GM12878 (cell line): ENCODE measurements at regions of chr16 and their contacts with region 1.

Region 1: GRCh38 chr16:69150146-69150865 is 17.9 kb downstream of the UTP4 start:
- DNase-seq: no peak
- ATAC-seq: peak; percentile 96
- H3K4me3 ChIP-seq: no peak overlapping the region
- H3K27ac ChIP-seq: no peak overlapping the region
- H3K4me1 ChIP-seq: no peaks in the 10 kb centered on the region
- H3K27me3 ChIP-seq: no peaks in the 10 kb centered on the region
- CTCF ChIP-seq: peak; percentile 64 to 76 (median 75)
- EP300 ChIP-seq: no peak
- POLR2A ChIP-seq: no peak
- RAD21 ChIP-seq: peak; percentile 84

Region 2: DNA sequence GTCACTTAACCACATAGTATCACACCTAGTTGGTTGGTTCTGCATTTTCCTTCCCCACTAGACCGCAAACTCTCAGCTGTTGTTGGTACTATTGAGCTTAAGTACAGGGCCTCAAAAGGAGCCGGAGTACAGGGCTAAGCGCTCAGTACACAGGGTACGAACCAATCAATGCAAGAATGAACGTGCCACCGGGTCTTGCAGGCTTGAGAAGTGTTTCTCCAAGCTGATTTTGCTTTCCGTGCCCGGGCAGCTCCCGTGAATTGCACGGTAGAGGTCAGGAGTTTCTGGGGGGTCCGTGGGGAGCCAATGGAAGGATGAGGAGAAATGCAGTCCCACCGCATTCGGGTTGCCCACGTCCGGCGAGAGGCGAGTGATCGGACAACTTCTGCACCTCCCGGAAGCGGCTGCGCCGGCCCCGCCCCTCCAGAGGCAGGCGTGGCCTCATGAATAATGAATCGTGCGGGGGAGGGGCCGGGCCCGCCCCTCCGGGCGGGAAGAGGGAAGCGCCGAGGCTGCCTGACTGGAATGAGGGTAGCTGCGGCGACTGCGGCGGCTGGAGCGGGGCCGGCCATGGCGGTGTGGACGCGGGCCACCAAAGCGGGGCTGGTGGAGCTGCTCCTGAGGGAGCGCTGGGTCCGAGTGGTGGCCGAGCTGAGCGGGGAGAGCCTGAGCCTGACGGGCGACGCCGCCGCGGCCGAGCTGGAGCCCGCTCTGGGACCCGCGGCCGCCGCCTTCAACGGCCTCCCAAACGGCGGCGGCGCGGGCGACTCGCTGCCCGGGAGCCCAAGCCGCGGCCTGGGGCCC is 36.5 kb after region 1 on chr16 and contains the start of gene SNTB2:
- CTCF ChIA-PET with region 1: interaction called, 14 read pairs
- POLR2A ChIA-PET with region 1: no interaction called
- RAD21 ChIA-PET with region 1: interaction called, 7 read pairs
- SMC1A ChIA-PET with region 1: interaction called, 9 read pairs
- in situ Hi-C with region 1: no loop called
- intact Hi-C with region 1: no loop called
- DNase-seq: peak; percentile 95
- ATAC-seq: peak; percentile 92
- H3K4me3 ChIP-seq: peak within 1 kb of the TSS; percentile 88
- H3K27ac ChIP-seq: peak within 1 kb of the TSS; percentile 90
- H3K4me1 ChIP-seq: peaks cover 22% of the 10 kb centered on the region
- H3K27me3 ChIP-seq: no peaks in the 10 kb centered on the region
- CTCF ChIP-seq: no peak
- EP300 ChIP-seq: peak; percentile 89 to 96
- POLR2A ChIP-seq: peak; percentile 77
- RAD21 ChIP-seq: no peak
- polyA plus RNA-seq, gene SNTB2: 1.2 to 1.4 TPM

Region 3: DNA sequence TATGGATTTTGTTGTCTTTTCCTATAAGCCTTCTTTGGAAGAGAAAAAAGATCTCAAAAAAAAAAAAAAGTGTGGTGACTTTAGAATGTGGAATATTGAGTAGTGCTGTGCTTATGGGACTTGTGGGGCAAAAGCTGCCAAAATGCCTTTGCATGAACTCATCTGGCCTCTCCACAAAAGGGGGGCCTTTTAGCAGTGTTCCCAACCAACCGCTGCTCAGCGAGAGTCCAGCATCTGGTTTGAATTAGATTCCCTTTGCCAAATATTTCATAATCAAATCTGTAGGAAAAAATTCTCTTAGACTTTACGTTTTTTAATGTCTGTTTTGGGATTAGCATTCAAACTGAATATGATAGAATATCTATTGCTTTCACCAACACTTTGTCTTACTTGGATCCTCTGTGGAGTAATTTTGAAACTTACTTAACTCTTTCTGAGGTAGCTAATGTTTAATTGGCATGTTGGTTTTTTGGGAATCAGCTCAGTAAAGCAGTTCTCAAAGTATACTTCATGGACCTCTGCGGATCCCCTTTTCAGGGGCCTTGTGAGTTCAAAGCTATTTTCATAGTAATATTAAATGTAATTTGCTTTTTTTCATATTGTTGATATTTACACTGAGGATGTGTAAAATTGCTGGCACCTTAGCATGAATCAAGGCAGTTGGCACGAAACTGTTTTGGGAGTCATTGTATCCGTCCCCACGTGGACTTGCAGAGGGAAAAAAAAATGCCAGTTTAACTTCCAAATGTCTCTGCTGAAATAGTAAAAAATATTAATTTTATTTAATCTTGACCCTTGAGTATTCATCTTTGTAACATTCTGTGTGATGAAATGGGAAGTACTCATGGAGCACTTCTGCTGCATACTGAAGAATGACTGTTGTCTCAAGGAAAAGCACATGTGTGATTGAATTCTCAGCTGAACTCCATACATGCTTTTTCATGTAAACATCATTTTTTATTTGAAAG is 126.1 kb after region 1 on chr16:
- CTCF ChIA-PET with region 1: interaction called, 19 read pairs
- POLR2A ChIA-PET with region 1: interaction called, 3 read pairs
- RAD21 ChIA-PET with region 1: interaction called, 3 read pairs
- SMC1A ChIA-PET with region 1: interaction called, 4 read pairs
- in situ Hi-C with region 1: no loop called
- intact Hi-C with region 1: no loop called
- DNase-seq: no peak
- ATAC-seq: no peak
- H3K4me3 ChIP-seq: no peak overlapping the region
- H3K27ac ChIP-seq: no peak overlapping the region
- H3K4me1 ChIP-seq: no peaks in the 10 kb centered on the region
- H3K27me3 ChIP-seq: no peaks in the 10 kb centered on the region
- CTCF ChIP-seq: no peak
- EP300 ChIP-seq: no peak
- POLR2A ChIP-seq: no peak
- RAD21 ChIP-seq: no peak

Region 4: DNA sequence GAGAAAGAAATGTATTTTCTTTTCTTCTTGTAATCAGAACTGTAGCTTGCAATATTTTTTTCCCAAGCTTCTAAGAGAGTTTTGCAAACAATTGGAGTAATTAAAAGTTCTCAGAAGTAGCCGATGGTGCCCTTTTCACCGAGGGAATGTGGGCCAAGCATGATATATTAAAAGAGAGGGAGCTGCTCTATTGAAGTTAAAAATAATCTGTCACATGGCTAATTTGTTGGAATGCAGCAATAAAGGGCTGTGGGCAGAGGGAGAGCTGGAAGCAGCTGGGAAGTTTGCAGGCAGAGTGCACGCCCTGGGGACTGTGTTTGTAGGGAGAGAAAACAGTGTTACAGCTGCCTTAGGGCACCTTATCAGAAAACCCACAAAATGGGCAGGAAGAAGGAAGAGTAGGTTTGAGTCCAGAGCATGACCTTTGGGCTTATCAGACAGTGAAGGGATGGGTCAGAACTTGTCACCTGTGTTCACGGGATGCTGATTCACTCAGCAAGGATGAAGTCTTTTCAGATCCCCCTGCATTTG is 254.0 kb after region 1 on chr16:
- CTCF ChIA-PET with region 1: no interaction called
- POLR2A ChIA-PET with region 1: no interaction called
- RAD21 ChIA-PET with region 1: no interaction called
- SMC1A ChIA-PET with region 1: no interaction called
- in situ Hi-C with region 1: no loop called
- intact Hi-C with region 1: no loop called
- DNase-seq: no peak
- ATAC-seq: no peak
- H3K4me3 ChIP-seq: no peak overlapping the region
- H3K27ac ChIP-seq: no peak overlapping the region
- H3K4me1 ChIP-seq: peaks cover 6% of the 10 kb centered on the region
- H3K27me3 ChIP-seq: no peaks in the 10 kb centered on the region
- CTCF ChIP-seq: no peak
- EP300 ChIP-seq: no peak
- POLR2A ChIP-seq: no peak
- RAD21 ChIP-seq: no peak

Region 5: DNA sequence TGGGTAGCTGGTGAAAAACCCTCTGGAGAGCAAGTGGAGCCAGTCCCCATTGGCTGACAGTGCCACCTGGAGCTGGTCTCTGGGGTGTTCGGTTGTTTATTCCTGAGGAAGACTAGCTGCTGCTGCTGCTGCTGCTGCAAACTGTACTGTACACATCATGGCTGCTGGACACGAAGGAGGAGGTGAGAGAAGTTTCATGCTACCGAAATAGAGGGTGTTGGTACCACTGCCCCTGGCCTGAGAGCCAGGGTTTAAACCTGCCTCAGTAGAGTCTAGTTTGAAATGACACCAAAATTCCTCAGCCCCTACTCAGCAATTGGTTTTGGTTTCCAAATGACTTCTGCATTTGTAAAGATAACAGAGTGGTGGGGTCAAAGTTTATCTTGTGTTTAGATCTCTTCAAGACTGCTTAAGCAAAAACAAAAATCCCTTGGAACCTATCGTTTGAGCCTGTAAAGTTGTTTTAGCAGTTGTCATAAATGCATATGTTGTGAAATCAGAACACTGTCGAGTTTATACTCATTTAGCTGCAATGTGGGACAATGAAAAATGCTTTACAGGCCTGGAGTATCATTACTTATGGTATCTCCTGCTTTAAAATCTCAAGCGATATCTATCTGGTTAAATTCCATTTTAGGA is 314.9 kb after region 1 on chr16:
- CTCF ChIA-PET with region 1: no interaction called
- POLR2A ChIA-PET with region 1: no interaction called
- RAD21 ChIA-PET with region 1: no interaction called
- SMC1A ChIA-PET with region 1: no interaction called
- in situ Hi-C with region 1: no loop called
- intact Hi-C with region 1: no loop called
- DNase-seq: peak; percentile 59
- ATAC-seq: peak; percentile 67
- H3K4me3 ChIP-seq: no peak overlapping the region
- H3K27ac ChIP-seq: peak overlapping the region; percentile 12
- H3K4me1 ChIP-seq: peaks cover 55% of the 10 kb centered on the region
- H3K27me3 ChIP-seq: no peaks in the 10 kb centered on the region
- CTCF ChIP-seq: peak in 1 of 3 experiments; percentile 5; a peak in 1 of 6 replicates
- EP300 ChIP-seq: peak in 1 of 2 experiments; percentile 53; a peak in 1 of 4 replicates
- POLR2A ChIP-seq: no peak
- RAD21 ChIP-seq: peak; percentile 35; the same call in 1 of the 2 replicates